ENCODE measurements at regions of chr1 and their contacts with region 1.

Region 1: GRCh38 chr1:235215453-235215852 is 54.4 kb upstream of the RBM34 start:
- DNase-seq: no peak
- ATAC-seq: peak; percentile 43
- H3K4me3 ChIP-seq: no peak overlapping the region
- H3K4me3 Mint-ChIP-seq: no peak overlapping the region
- H3K27ac ChIP-seq: no peak overlapping the region
- H3K27ac Mint-ChIP-seq: no peak overlapping the region
- H3K4me1 ChIP-seq: no peaks in the 10 kb centered on the region
- H3K4me1 Mint-ChIP-seq: peaks cover 29% of the 10 kb centered on the region
- H3K27me3 ChIP-seq: no peaks in the 10 kb centered on the region
- H3K27me3 Mint-ChIP-seq: no peaks in the 10 kb centered on the region
- CTCF ChIP-seq: no peak

Region 2: GRCh38 chr1:235077571-235078479 is 137.6 kb before region 1 on chr1:
- CTCF ChIA-PET with region 1: no interaction called
- POLR2A ChIA-PET with region 1: no interaction called
- intact Hi-C with region 1: no loop called
- DNase-seq: peak in 3 of 14 experiments; percentile 14 to 69 (median 57)
- ATAC-seq: no peak
- H3K4me3 ChIP-seq: no peak overlapping the region
- H3K4me3 Mint-ChIP-seq: no peak overlapping the region
- H3K27ac ChIP-seq: no peak overlapping the region
- H3K27ac Mint-ChIP-seq: no peak overlapping the region
- H3K4me1 ChIP-seq: peaks cover 38% of the 10 kb centered on the region
- H3K4me1 Mint-ChIP-seq: peaks cover 16% of the 10 kb centered on the region
- H3K27me3 ChIP-seq: no peaks in the 10 kb centered on the region
- H3K27me3 Mint-ChIP-seq: no peaks in the 10 kb centered on the region
- CTCF ChIP-seq: no peak

Region 3: GRCh38 chr1:235128456-235129328 is 86.8 kb before region 1 on chr1 and contains the start of gene TOMM20:
- CTCF ChIA-PET with region 1: no interaction called
- POLR2A ChIA-PET with region 1: no interaction called
- intact Hi-C with region 1: no loop called
- DNase-seq: peak; percentile 86 to 99 (median 92)
- ATAC-seq: peak; percentile 91
- H3K4me3 ChIP-seq: peak within 1 kb of the TSS; percentile 86
- H3K4me3 Mint-ChIP-seq: peak within 1 kb of the TSS; percentile 98
- H3K27ac ChIP-seq: peak within 1 kb of the TSS; percentile 89 to 93
- H3K27ac Mint-ChIP-seq: peak within 1 kb of the TSS; percentile 98
- H3K4me1 ChIP-seq: peaks cover 38% of the 10 kb centered on the region
- H3K4me1 Mint-ChIP-seq: peaks cover 45% of the 10 kb centered on the region
- H3K27me3 ChIP-seq: no peaks in the 10 kb centered on the region
- H3K27me3 Mint-ChIP-seq: no peaks in the 10 kb centered on the region
- CTCF ChIP-seq: no peak
- total RNA-seq, gene TOMM20: 129 to 133 TPM

Region 4: DNA sequence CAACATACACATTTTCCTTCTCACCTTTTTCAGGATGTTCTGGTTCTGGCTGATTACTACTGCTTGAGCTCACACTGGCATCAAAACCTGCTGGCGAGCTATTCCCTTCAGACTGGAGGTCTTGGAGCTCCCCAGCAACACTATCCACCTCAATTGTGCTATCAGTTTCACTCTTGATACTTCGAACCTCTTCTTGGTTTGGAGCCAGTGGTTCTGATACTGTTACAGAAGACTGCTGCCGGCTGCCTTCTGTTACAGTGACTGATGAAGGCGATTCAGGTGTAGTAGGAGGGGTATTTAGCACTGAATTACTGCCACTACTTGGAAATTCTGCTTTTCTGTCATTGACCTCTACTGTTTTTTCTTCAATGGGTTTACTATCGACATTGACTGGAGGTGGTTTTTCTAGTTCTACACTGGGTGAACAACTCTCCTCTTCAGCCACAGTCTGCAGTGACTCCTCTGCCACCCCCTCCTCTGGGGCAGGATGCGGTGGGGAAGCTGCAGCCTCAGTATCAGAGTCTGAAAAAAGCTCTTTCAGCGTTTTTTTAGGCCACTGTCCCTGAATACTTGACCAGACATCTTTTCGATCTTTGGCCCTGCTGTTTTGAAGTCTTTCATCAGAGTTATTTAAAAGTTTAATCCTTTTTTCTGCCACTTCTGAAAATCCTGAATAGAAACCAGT is 33.8 kb before region 1 on chr1:
- CTCF ChIA-PET with region 1: no interaction called
- POLR2A ChIA-PET with region 1: no interaction called
- intact Hi-C with region 1: loop called in 1 of 2 experiments (anchors 5 kb)
- DNase-seq: peak in 1 of 14 experiments; percentile 11
- ATAC-seq: peak; percentile 24
- H3K4me3 ChIP-seq: no peak overlapping the region
- H3K4me3 Mint-ChIP-seq: no peak overlapping the region
- H3K27ac ChIP-seq: no peak overlapping the region
- H3K27ac Mint-ChIP-seq: peak overlapping the region; percentile 42
- H3K4me1 ChIP-seq: no peaks in the 10 kb centered on the region
- H3K4me1 Mint-ChIP-seq: peaks cover 13% of the 10 kb centered on the region
- H3K27me3 ChIP-seq: no peaks in the 10 kb centered on the region
- H3K27me3 Mint-ChIP-seq: no peaks in the 10 kb centered on the region
- CTCF ChIP-seq: no peak

Measured in CD4-positive, alpha-beta T cell (primary cell).